Naive thymus-derived CD4-positive, alpha-beta T cell (primary cell): ENCODE measurements at regions of chr10 and their contacts with region 1.

Region 1: DNA sequence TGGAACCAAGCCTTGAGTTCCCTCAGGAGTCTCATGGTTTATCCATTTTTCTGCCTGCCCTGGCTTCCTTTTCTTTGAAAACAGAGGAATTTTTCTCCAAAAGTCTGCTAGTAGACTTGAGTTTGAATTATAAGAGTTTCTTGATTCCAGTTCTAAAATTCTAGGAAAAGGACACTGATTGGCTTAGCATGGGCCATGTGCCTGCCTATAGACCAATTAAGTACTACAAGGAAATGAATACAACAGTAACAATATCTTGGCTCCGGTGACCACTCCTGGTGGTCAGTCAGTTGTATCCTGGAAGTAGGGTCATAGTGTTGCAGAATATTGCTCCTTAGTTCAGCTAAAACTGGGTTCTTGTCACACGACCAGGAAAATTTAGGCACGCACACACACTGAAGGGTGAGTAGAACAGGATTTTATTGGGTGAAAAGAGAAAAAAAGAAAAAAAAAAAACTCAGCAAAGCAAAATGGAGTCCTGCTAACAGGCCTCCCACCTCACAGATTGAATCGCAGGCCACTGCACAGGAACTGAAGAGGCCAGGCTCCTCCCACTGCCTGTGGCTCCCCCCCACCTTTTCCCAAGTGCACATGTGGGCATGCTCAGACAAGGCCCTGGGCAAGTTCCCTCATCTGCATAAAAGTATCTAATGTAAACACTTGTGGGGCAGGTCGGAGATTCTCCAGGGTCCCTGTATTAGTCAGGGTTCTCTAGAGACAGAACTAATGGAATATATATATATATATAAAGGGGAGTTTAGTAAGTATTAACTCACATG is 155.1 kb downstream of the LYZL1 start:
- DNase-seq: no peak
- ATAC-seq: no peak
- H3K4me3 ChIP-seq: no peak overlapping the region
- H3K4me3 Mint-ChIP-seq: no peak overlapping the region
- H3K27ac ChIP-seq: no peak overlapping the region
- H3K27ac Mint-ChIP-seq: no peak overlapping the region
- H3K4me1 ChIP-seq: no peaks in the 10 kb centered on the region
- H3K4me1 Mint-ChIP-seq: peaks cover 0 to 14% (median 4%) of the 10 kb centered on the region in 7 donors
- H3K27me3 ChIP-seq: no peaks in the 10 kb centered on the region
- H3K27me3 Mint-ChIP-seq: no peaks in the 10 kb centered on the region

Region 2: GRCh38 chr10:29377333-29377961 is 66.5 kb before region 1 on chr10:
- CTCF ChIA-PET with region 1: no interaction called
- POLR2A ChIA-PET with region 1: no interaction called
- intact Hi-C with region 1: loop called (anchors 1 to 2 kb)
- DNase-seq: peak in 4 of 9 donors; percentile 6 to 25 (median 14)
- ATAC-seq: no peak
- H3K4me3 ChIP-seq: no peak overlapping the region
- H3K4me3 Mint-ChIP-seq: no peak overlapping the region
- H3K27ac ChIP-seq: no peak overlapping the region
- H3K27ac Mint-ChIP-seq: no peak overlapping the region
- H3K4me1 ChIP-seq: no peaks in the 10 kb centered on the region
- H3K4me1 Mint-ChIP-seq: peaks cover 2 to 12% (median 8%) of the 10 kb centered on the region in 7 donors
- H3K27me3 ChIP-seq: peaks cover 0 to 3% of the 10 kb centered on the region in 2 donors
- H3K27me3 Mint-ChIP-seq: peaks cover 0 to 9% (median 3%) of the 10 kb centered on the region in 5 donors

Region 3: GRCh38 chr10:29386342-29386999 is 57.5 kb before region 1 on chr10:
- CTCF ChIA-PET with region 1: interaction called, 5 read pairs
- POLR2A ChIA-PET with region 1: no interaction called
- intact Hi-C with region 1: loop called (anchors 1 to 2 kb)
- DNase-seq: peak in 6 of 9 donors; percentile 5 to 40 (median 35)
- ATAC-seq: peak; percentile 67
- H3K4me3 ChIP-seq: no peak overlapping the region
- H3K4me3 Mint-ChIP-seq: no peak overlapping the region
- H3K27ac ChIP-seq: no peak overlapping the region
- H3K27ac Mint-ChIP-seq: no peak overlapping the region
- H3K4me1 ChIP-seq: no peaks in the 10 kb centered on the region
- H3K4me1 Mint-ChIP-seq: peaks cover 0 to 6% (median 0%) of the 10 kb centered on the region in 7 donors
- H3K27me3 ChIP-seq: peaks cover 0 to 3% of the 10 kb centered on the region in 2 donors
- H3K27me3 Mint-ChIP-seq: peaks cover 0 to 13% (median 5%) of the 10 kb centered on the region in 5 donors

Region 4: GRCh38 chr10:30219971-30220751 is 776.2 kb after region 1 on chr10:
- CTCF ChIA-PET with region 1: no interaction called
- POLR2A ChIA-PET with region 1: no interaction called
- intact Hi-C with region 1: no loop called
- DNase-seq: no peak
- ATAC-seq: peak; percentile 38
- H3K4me3 ChIP-seq: no peak overlapping the region
- H3K4me3 Mint-ChIP-seq: peak overlapping the region in 8 of 10 donors; percentile 14 to 60 (median 52)
- H3K27ac ChIP-seq: no peak overlapping the region
- H3K27ac Mint-ChIP-seq: no peak overlapping the region
- H3K4me1 ChIP-seq: no peaks in the 10 kb centered on the region
- H3K4me1 Mint-ChIP-seq: peaks cover 12 to 14% (median 13%) of the 10 kb centered on the region in 7 donors
- H3K27me3 ChIP-seq: no peaks in the 10 kb centered on the region
- H3K27me3 Mint-ChIP-seq: peaks cover 27 to 56% (median 41%) of the 10 kb centered on the region in 5 donors